ENCODE measurements at regions of chr3 and their contacts with region 1.

Region 1: DNA sequence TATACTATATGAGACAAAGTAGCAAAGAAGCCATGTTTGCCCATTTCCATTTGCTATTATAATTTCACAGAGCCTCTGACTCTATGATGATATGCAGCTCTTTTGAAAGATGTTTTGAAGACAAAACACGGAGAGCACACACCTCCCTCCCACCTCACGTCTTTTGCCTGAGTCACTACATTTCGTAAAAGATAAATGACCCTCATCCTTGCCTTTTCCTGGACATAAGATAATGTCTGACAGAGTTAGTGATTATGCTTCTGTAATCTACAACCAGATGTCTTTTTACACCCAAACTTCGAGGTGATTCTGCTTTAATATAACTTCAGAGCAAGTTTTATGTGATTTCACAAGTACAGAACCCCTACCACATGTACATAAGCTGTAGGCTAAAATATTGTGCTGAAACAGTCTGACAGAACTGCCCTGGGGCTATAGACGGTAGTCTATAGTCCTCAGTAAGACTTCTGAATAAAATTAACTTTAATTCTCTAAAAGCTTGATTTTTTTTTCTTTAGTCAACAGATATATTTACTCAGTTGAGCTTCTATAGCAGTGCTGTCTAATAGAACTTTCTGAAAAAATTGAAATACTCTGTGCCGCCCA is 99.9 kb downstream of the CD200R1L start:
- DNase-seq: no peak
- ATAC-seq: no peak
- H3K4me3 ChIP-seq: no peak overlapping the region
- H3K4me3 Mint-ChIP-seq: no peak overlapping the region
- H3K27ac ChIP-seq: no peak overlapping the region
- H3K27ac Mint-ChIP-seq: peak overlapping the region in 1 of 2 donors; percentile 69
- H3K4me1 ChIP-seq: no peaks in the 10 kb centered on the region
- H3K4me1 Mint-ChIP-seq: peaks cover 6 to 36% (median 12%) of the 10 kb centered on the region in 3 donors
- H3K27me3 ChIP-seq: no peaks in the 10 kb centered on the region
- H3K27me3 Mint-ChIP-seq: no peaks in the 10 kb centered on the region

Region 2: DNA sequence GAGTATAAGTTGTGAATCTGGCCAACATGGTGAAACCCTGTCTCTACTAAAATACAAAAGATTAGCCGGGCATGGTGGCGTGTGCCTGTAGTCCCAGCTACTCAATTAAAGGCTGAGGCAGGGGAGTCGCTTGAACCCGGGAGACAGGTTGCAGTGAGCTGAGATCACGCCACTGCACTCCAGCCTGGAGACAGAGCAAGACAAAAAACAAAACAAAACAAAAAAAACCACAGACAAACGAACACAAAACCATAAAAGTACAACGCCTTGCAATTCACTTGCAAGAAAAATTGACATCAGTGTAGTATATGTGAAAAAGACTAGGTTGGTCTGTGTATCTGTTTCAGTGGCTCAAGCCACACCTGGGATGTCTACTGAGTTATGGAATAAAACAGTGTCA is 76.0 kb before region 1 on chr3:
- CTCF ChIA-PET with region 1: no interaction called
- POLR2A ChIA-PET with region 1: no interaction called
- DNase-seq: no peak
- ATAC-seq: no peak
- H3K4me3 ChIP-seq: no peak overlapping the region
- H3K4me3 Mint-ChIP-seq: no peak overlapping the region
- H3K27ac ChIP-seq: peak overlapping the region; percentile 56
- H3K27ac Mint-ChIP-seq: peak overlapping the region; percentile 17 to 64
- H3K4me1 ChIP-seq: peaks cover 28% of the 10 kb centered on the region in 2 experiments
- H3K4me1 Mint-ChIP-seq: peaks cover 25 to 62% (median 40%) of the 10 kb centered on the region in 3 donors
- H3K27me3 ChIP-seq: no peaks in the 10 kb centered on the region
- H3K27me3 Mint-ChIP-seq: peaks cover 0 to 6% of the 10 kb centered on the region in 2 donors

Region 3: DNA sequence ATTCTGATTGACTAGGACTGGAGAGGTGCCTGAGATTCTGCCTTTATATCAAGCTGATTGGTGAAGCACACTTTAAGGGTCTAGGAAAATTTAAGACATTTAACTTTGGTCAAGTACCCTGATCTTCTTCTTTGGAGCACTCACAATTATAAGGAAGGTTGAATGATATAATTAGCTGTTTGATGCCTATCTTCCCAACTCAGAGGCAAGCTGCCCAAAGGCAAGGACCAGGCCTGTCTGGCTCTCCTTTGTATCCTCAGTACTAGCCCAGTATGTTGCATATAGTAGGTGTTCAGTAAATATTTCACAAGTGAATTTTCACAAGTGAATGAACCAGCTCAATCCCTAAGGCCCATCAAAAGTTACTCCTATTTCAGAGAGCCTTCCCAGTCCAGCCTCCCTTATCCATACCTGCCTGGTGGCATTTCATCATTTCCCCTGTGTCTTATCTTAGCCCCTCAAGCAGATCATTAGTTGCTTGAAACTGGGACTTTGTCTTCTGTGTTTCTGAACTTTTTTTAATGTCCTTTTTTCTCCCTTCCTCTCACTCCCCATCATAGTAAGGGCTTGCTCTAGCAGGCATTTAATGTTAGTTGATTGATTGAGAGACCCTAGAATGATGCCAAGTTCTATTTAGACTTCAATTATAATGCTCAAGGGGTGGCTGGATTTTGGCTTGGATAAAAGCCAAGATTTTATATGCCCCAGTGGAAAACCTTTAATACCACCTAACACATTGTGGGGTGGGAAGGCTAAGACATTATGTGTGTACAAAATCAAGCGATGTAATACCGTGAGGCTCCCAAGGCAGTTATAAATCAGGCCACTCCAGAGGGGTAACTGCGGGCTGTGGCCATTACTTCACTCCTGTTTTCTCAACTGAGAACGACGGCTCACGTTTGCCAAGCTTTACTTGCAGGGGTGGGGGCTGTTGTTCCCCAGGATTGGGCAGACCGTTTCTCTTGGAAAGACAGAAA is 421.3 kb after region 1 on chr3:
- CTCF ChIA-PET with region 1: interaction called in 1 of 2 experiments, 10 read pairs
- POLR2A ChIA-PET with region 1: no interaction called
- DNase-seq: no peak
- ATAC-seq: no peak
- H3K4me3 ChIP-seq: no peak overlapping the region
- H3K4me3 Mint-ChIP-seq: no peak overlapping the region
- H3K27ac ChIP-seq: no peak overlapping the region
- H3K27ac Mint-ChIP-seq: no peak overlapping the region
- H3K4me1 ChIP-seq: no peaks in the 10 kb centered on the region
- H3K4me1 Mint-ChIP-seq: no peaks in the 10 kb centered on the region
- H3K27me3 ChIP-seq: no peaks in the 10 kb centered on the region
- H3K27me3 Mint-ChIP-seq: no peaks in the 10 kb centered on the region